ENCODE measurements at regions of chr6 and their contacts with region 1.

Region 1: DNA sequence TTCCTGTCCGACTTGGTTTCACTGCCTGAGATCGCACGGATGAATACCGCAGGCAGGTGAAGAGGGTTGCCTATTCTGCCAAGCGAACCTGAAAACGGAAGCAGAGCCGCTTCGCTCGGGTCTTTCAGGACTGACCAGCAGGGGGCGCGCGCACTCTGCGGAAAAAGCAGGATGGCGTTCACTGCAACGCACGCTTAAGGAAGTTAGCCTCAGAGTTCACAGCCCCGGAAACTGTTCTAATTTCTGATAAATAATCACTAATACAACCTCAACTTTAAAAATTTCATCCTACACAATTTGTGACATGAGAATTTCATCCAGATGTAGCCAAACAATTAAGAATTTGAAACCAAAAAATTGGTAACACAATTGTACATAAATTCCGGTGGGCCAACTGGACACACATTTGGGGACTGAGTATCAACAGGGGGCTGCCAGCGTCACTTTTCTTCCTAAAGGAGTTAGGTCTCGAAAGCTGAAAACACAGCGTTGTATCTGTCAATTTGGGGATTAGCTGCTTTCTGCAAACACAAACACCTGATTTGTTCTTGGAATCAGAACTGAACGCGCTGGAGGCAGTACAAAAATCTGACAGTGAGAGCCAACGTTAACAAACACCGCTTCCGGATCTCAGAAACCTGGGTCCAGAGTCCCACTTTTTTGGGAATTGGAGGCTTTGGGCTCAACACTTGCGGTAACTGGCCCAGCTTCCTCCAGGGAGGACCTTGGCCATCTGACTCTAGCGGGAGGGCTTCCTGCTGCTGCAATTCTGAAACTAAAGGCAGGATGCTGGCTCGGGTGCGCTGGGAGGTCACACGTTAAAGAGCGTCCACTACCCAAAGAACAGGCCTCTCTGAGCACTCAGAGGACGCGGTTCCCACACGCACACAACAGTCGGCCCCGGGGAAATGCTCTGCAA is 8.8 kb downstream of the PXDC1 start:
- DNase-seq: peak; percentile 88
- ATAC-seq: peak; percentile 26
- H3K4me3 Mint-ChIP-seq: peak overlapping the region; percentile 59
- H3K27ac Mint-ChIP-seq: peak overlapping the region; percentile 76
- H3K4me1 Mint-ChIP-seq: peaks cover 48% of the 10 kb centered on the region
- H3K27me3 Mint-ChIP-seq: no peaks in the 10 kb centered on the region
- CTCF ChIP-seq: peak; percentile 55

Region 2: DNA sequence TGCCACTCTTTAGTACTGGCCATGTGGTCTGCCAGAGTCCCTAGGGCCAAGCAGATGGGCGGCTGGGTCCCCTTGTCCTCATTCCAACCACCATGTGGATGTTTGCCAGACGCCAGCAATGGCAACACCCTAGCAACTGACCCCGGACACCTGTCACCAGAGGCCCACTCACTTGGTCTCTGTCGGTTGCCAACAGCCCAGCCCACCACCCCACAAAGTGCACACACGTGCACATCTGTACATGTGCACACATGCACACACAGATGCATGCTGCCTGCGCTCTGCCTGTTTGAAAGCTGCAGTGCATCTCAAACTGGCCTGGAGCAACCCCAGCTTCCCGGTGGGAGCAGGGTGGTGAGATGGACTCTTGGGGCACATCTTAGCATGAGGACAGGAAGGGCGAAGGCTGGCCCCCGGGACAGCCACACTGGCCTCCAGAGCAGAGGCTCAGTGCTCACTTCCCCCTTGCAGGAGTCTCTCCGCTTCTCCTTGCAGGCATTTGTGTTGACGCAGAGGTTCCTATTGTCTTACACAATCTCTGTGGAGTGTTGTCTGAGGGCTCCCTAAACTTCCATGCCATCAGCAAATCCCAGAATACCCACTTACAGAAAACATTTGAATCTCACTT is 430.0 kb before region 1 on chr6:
- CTCF ChIA-PET with region 1: no interaction called
- POLR2A ChIA-PET with region 1: no interaction called
- intact Hi-C with region 1: no loop called
- DNase-seq: no peak
- ATAC-seq: no peak
- H3K4me3 Mint-ChIP-seq: no peak overlapping the region
- H3K27ac Mint-ChIP-seq: no peak overlapping the region
- H3K4me1 Mint-ChIP-seq: no peaks in the 10 kb centered on the region
- H3K27me3 Mint-ChIP-seq: peaks cover 11% of the 10 kb centered on the region
- CTCF ChIP-seq: no peak

Region 3: DNA sequence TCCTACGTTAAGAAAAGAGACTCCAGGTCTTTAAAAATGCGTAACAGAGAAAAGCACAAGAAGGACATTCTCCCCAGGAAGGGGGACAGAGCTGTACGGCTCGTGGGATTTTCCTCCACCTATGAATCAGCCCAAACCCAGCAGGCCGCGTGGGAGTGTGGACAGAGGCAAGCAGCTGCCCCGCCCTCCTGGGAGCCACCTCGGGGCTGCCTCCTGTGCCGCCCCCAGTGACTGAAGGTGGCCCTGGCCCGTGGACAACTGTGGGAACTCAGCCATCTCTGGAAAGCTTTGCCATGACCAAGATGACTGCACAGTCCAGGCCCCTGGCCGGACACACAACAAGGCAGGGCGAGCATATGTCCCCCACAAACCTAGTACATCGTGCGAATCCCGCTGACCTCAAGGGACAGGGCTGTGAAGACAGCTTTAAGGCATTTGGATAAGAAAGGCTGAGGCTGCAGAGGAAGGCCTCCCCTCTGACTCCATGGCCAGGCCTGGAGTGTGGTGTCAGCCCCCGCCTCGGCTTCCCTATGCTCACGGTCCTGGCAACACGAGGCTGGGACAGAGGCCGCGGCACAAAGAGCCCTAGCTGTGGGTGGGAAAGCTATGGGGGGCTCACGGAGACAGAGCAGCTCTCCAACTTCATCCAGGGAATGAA is 18.1 kb before region 1 on chr6:
- CTCF ChIA-PET with region 1: no interaction called
- POLR2A ChIA-PET with region 1: no interaction called
- intact Hi-C with region 1: no loop called
- DNase-seq: no peak
- ATAC-seq: no peak
- H3K4me3 Mint-ChIP-seq: no peak overlapping the region
- H3K27ac Mint-ChIP-seq: no peak overlapping the region
- H3K4me1 Mint-ChIP-seq: no peaks in the 10 kb centered on the region
- H3K27me3 Mint-ChIP-seq: no peaks in the 10 kb centered on the region
- CTCF ChIP-seq: no peak

Region 4: DNA sequence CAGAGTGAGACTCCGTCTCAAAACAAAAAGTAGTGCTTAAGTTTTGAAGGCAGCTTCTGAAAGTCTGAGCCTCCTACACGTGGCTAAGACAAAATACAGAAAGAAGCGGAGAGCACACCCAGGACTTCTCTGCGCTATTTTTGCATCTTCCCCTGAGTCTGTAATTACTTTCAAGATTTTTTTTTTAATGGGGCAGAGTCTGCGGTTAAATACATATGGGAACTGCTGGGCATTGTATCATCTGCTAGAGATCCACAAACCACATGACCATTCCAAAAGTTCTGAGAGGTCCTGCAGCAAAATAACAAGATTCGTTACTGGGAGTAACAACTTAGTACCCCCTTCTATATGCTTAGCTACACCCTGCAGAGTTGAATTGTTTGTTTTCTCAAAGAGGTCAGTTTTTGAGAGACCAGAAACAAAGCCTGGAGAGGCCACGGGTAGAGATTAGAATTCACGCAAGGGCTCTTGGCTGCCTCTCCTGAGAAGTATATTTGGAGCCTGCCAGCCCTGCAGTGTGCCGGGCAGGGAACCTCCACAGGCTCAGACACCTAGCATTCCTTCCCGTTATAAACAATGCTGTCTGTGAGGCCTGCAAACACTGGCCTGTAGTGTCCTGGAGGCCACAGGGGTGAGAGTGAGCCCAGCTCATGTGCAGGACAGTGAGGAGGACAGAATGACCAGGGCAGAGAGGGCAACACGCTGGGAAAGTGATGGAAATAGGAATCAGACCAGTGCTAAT is 58.3 kb after region 1 on chr6:
- CTCF ChIA-PET with region 1: no interaction called
- POLR2A ChIA-PET with region 1: interaction called, 17 read pairs
- intact Hi-C with region 1: loop called (anchors 1 kb)
- DNase-seq: no peak
- ATAC-seq: no peak
- H3K4me3 Mint-ChIP-seq: no peak overlapping the region
- H3K27ac Mint-ChIP-seq: no peak overlapping the region
- H3K4me1 Mint-ChIP-seq: peaks cover 53% of the 10 kb centered on the region
- H3K27me3 Mint-ChIP-seq: no peaks in the 10 kb centered on the region
- CTCF ChIP-seq: no peak

Region 5: DNA sequence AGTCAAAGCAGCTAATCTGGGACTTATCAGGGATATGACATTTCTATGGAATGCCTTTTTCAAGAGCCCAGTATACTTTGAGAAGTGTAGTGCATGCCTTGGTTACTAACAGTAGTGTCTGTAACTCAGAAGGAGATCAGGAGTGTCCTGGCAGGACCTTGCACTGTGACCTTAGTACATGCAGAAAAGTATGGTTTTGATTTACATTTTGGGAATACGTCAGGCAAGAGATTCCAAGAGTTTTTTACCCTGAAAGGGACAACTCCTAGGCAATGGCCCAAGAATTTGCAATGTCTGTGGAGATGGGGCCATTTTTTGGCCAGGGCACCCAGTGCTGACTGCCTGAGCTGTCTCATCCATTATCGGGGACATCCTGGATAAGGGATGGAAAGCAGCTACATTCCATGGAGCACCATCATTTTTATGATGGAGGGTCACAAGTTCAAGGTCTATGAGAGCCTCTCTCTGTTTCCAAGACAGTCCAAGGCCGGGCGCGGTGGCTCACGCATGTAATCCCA is 186.7 kb after region 1 on chr6:
- CTCF ChIA-PET with region 1: interaction called, 30 read pairs
- POLR2A ChIA-PET with region 1: no interaction called
- intact Hi-C with region 1: loop called (anchors 1 kb)
- DNase-seq: no peak
- ATAC-seq: no peak
- H3K4me3 Mint-ChIP-seq: no peak overlapping the region
- H3K27ac Mint-ChIP-seq: no peak overlapping the region
- H3K4me1 Mint-ChIP-seq: no peaks in the 10 kb centered on the region
- H3K27me3 Mint-ChIP-seq: peaks cover 2% of the 10 kb centered on the region
- CTCF ChIP-seq: no peak

Region 6: DNA sequence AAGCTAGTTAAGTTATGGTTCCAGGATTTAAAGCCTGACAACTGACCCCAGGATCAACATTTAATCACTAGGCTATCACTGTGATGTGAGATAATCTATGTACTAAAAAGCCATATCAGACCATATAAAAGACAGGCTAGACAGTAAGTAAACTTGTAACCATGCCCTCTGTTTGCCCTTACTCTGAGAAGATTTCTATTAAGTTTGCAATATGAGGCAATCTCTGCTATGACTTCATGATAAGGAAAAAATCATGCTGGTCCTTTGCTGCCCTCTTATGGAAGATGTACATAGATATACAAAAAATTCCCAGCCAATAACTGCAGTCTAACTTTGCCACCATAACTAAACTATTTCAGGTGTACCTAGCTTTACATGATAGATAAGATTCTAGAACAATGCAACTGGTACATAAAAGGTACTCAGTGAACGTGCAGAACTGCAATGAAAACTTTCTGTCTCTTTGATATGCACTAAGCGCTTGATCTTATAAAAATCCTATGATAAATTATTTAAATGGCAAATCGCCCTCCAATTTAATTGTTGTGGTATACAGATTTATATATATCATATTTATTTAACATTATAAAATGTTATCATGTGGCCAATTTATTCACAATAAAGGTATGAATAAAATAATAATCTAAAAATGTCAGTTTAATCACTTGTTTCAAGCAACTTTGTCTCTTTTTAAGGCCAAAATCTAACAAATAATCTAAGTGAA is 265.8 kb after region 1 on chr6:
- CTCF ChIA-PET with region 1: interaction called, 7 read pairs
- POLR2A ChIA-PET with region 1: no interaction called
- intact Hi-C with region 1: loop called (anchors 1 kb)
- DNase-seq: no peak
- ATAC-seq: peak; percentile 49
- H3K4me3 Mint-ChIP-seq: no peak overlapping the region
- H3K27ac Mint-ChIP-seq: no peak overlapping the region
- H3K4me1 Mint-ChIP-seq: peaks cover 25% of the 10 kb centered on the region
- H3K27me3 Mint-ChIP-seq: no peaks in the 10 kb centered on the region
- CTCF ChIP-seq: no peak

Region 7: GRCh38 chr6:4210629-4211423 is 468.1 kb after region 1 on chr6:
- CTCF ChIA-PET with region 1: interaction called, 5 read pairs
- POLR2A ChIA-PET with region 1: no interaction called
- intact Hi-C with region 1: loop called (anchors 1 kb)
- DNase-seq: peak; percentile 28
- ATAC-seq: peak; percentile 95
- H3K4me3 Mint-ChIP-seq: peak overlapping the region; percentile 44
- H3K27ac Mint-ChIP-seq: peak overlapping the region; percentile 75
- H3K4me1 Mint-ChIP-seq: peaks cover 38% of the 10 kb centered on the region
- H3K27me3 Mint-ChIP-seq: peaks cover 5% of the 10 kb centered on the region
- CTCF ChIP-seq: no peak

Measured in activated B cell treated with CpG ODN at 0.5 μM for 24 hours (primary cell).